GM18951 (cell line): ENCODE measurements at regions of chr7 and their contacts with region 1.

Region 1: GRCh38 chr7:38932509-38933168 is 23.6 kb upstream of the VPS41 start:
- POLR2A ChIP-seq: no peak

Region 2: DNA sequence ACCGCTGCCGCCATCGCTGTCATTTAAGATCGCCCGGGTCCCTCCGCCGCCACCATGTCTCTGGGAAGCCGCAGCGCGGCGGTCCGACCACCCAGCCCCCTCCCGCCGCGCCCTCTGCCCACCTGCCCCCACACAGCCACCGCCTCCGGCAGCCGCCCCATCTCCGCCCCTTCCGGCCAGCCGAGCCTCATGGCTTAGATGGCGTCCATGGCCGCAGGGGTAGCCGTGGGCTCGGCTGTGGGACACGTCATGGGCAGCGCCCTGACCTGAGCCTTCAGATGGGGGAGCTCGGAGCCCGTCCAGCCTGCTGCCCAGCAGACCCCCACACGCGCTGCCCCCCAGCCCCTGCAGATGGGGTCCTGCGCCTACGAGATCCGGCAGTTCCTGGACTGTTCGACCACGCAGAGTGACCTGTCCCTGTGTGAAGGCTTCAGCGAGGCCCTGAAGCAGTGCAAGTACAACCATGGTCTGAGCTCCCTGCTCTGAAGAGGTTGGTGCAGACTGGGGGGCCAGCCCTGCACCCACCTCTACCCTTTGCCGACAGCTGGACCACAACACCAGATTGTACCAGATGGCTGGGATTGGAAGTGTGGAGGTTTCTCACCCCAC is 621.2 kb before region 1 on chr7:
- in situ Hi-C with region 1: no loop called
- POLR2A ChIP-seq: no peak

Region 3: GRCh38 chr7:39465055-39465929 is 532.7 kb after region 1 on chr7:
- in situ Hi-C with region 1: loop called (anchors 10 kb)
- POLR2A ChIP-seq: no peak